ENCODE measurements at regions of chr3 and their contacts with region 1.

Region 1: DNA sequence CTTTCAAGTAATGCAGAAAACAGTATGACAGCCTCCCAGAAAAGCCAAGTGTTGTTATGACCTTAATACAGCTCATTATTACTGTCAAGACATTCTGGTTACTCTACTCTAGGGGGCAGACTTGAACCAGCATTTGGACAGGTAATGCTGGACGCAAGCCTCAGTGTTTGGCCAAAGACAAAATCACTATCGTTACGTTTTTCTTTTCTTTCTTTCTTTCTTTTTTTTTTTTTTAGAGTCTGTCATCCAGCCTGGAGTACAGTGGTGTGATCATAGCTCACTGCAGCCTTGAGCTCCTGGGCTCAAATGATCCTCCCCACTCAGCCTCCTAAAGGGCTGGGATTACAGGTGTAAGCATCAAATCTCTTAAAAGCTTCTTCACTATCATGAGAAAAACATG is 29.4 kb upstream of the TMEM45A start:
- DNase-seq: peak; percentile 43 to 72
- H3K4me3 ChIP-seq: no peak overlapping the region
- H3K27ac ChIP-seq: no peak overlapping the region
- H3K4me1 ChIP-seq: no peaks in the 10 kb centered on the region
- H3K27me3 ChIP-seq: no peaks in the 10 kb centered on the region
- CTCF ChIP-seq: peak; percentile 98

Region 2: GRCh38 chr3:99602183-99602582 is 860.8 kb before region 1 on chr3:
- CTCF ChIA-PET with region 1: no interaction called
- POLR2A ChIA-PET with region 1: no interaction called
- intact Hi-C with region 1: no loop called
- DNase-seq: no peak
- H3K4me3 ChIP-seq: no peak overlapping the region
- H3K27ac ChIP-seq: no peak overlapping the region
- H3K4me1 ChIP-seq: no peaks in the 10 kb centered on the region
- H3K27me3 ChIP-seq: no peaks in the 10 kb centered on the region
- CTCF ChIP-seq: no peak

Region 3: GRCh38 chr3:100437721-100438622 is 25.0 kb before region 1 on chr3:
- CTCF ChIA-PET with region 1: interaction called, 15 read pairs
- POLR2A ChIA-PET with region 1: no interaction called
- intact Hi-C with region 1: no loop called
- DNase-seq: no peak
- H3K4me3 ChIP-seq: no peak overlapping the region
- H3K27ac ChIP-seq: no peak overlapping the region
- H3K4me1 ChIP-seq: no peaks in the 10 kb centered on the region
- H3K27me3 ChIP-seq: no peaks in the 10 kb centered on the region
- CTCF ChIP-seq: no peak

Region 4: DNA sequence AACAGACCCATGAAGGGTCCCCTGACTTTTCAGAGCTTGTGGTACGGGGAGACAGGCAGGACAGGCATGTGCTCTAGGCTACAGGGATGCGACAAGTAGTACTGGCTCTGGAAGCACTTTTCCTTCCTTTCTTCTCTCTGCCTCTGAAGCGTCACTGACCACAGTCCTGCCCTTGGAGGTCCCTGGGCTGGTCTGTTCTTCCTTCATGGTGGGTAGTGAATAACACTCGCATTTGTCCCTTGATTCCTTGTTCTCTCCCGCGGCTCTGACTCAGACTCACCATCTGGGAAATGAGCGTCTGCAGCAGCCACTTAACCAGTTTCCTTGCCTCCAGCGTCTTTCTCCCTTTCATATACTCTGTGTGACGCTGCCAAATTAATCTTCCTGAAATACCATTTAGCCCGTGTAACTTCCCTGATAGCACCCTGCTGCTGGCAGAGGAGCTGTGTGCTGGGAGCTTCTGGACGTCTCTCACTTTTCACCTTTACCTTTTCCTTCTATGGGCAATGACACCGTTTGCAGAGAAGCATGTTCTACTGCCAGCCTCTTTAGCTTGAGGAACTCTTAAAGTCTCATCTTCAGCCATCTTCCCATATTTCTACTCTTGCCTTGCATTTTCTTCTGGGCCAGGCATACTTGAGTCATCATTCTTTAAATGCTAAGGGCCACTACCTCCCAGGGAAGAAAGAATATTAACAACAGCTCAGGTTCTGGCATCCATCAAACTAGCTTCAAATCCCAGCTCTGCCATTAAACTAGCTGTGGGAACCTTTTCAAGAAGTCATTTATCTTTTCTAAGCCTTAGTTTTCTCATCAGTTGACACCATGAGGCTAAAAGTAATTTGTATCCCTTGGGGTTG is 63.0 kb after region 1 on chr3:
- CTCF ChIA-PET with region 1: interaction called, 13 read pairs
- POLR2A ChIA-PET with region 1: no interaction called
- intact Hi-C with region 1: no loop called
- DNase-seq: peak; percentile 82 to 99
- H3K4me3 ChIP-seq: peak overlapping the region; percentile 30; the same call in 1 of the 2 replicates
- H3K27ac ChIP-seq: peak overlapping the region; percentile 86
- H3K4me1 ChIP-seq: peaks cover 26% of the 10 kb centered on the region
- H3K27me3 ChIP-seq: no peaks in the 10 kb centered on the region
- CTCF ChIP-seq: no peak

Region 5: GRCh38 chr3:100603469-100603868 is 140.5 kb after region 1 on chr3:
- CTCF ChIA-PET with region 1: interaction called, 25 read pairs
- POLR2A ChIA-PET with region 1: interaction called, 15 read pairs
- intact Hi-C with region 1: no loop called
- DNase-seq: peak; percentile 41 to 60
- H3K4me3 ChIP-seq: no peak overlapping the region
- H3K27ac ChIP-seq: no peak overlapping the region
- H3K4me1 ChIP-seq: peaks cover 14% of the 10 kb centered on the region
- H3K27me3 ChIP-seq: no peaks in the 10 kb centered on the region
- CTCF ChIP-seq: peak; percentile 77

Region 6: GRCh38 chr3:100708967-100709841 is 246.2 kb after region 1 on chr3 and contains the start of gene TFG:
- CTCF ChIA-PET with region 1: interaction called, 16 read pairs
- POLR2A ChIA-PET with region 1: no interaction called
- intact Hi-C with region 1: loop called (anchors 5 kb)
- DNase-seq: peak; percentile 99 to 100
- H3K4me3 ChIP-seq: peak within 1 kb of the TSS; percentile 84
- H3K27ac ChIP-seq: peak within 1 kb of the TSS; percentile 95
- H3K4me1 ChIP-seq: peaks cover 35% of the 10 kb centered on the region
- H3K27me3 ChIP-seq: no peaks in the 10 kb centered on the region
- CTCF ChIP-seq: no peak
- total RNA-seq, gene TFG: 163 and 224 TPM in 2 replicates

Region 7: DNA sequence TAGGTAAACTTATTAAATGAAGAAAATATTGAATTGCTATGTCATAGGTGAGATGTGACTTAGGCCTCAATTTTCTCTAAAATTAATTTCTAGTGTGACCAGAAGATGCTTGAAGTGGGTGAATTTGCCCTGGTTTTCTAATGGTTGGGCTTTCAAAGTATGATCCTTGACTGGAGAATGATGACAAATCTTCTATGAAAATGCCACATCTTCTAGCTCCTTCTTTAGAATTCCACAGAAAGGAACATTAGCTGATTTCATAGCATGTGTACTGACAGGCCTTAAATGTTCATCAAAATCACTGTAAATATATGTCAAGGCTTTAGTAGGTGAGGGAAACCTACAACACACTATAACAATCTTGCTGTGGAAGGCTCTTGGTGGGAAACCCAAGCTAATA is 521.3 kb after region 1 on chr3:
- CTCF ChIA-PET with region 1: interaction called, 11 read pairs
- POLR2A ChIA-PET with region 1: no interaction called
- intact Hi-C with region 1: no loop called
- DNase-seq: no peak
- H3K4me3 ChIP-seq: no peak overlapping the region
- H3K27ac ChIP-seq: no peak overlapping the region
- H3K4me1 ChIP-seq: no peaks in the 10 kb centered on the region
- H3K27me3 ChIP-seq: no peaks in the 10 kb centered on the region
- CTCF ChIP-seq: no peak